BJ (cell line): ENCODE measurements at regions of chr5 and their contacts with region 1.

Region 1: GRCh38 chr5:54689411-54690251 is 172.1 kb downstream of the SNX18 start:
- DNase-seq: no peak
- H3K4me3 ChIP-seq: no peak overlapping the region
- H3K27me3 ChIP-seq: no peaks in the 10 kb centered on the region
- CTCF ChIP-seq: no peak

Region 2: GRCh38 chr5:54136516-54137440 is 552.9 kb before region 1 on chr5:
- CTCF ChIA-PET with region 1: no interaction called
- POLR2A ChIA-PET with region 1: interaction called, 13 read pairs
- DNase-seq: no peak
- H3K4me3 ChIP-seq: no peak overlapping the region
- H3K27me3 ChIP-seq: no peaks in the 10 kb centered on the region
- CTCF ChIP-seq: no peak

Region 3: DNA sequence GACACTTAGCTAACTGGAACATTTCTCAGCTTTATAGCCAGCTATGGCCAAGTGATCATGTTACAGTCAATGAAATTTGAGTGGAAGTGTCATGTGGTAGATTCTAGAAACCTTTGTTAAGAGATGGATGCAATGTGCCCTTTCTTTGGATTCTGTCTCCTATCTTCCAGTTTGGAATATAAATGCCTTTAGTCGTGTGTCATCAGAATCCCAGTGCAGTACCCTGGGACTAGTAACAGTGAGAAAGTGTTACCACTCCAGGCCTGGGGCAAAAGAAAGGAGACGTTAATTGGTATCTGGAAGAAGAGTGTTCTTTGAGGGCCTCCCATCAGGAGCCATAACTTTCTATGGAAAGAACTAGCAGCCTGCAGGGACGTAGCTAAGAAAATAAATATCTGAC is 22.5 kb before region 1 on chr5:
- CTCF ChIA-PET with region 1: no interaction called
- POLR2A ChIA-PET with region 1: no interaction called
- DNase-seq: no peak
- H3K4me3 ChIP-seq: no peak overlapping the region
- H3K27me3 ChIP-seq: no peaks in the 10 kb centered on the region
- CTCF ChIP-seq: no peak